Astrocyte of the cerebellum (primary cell): ENCODE measurements at regions of chr13 and their contacts with region 1.

Region 1: DNA sequence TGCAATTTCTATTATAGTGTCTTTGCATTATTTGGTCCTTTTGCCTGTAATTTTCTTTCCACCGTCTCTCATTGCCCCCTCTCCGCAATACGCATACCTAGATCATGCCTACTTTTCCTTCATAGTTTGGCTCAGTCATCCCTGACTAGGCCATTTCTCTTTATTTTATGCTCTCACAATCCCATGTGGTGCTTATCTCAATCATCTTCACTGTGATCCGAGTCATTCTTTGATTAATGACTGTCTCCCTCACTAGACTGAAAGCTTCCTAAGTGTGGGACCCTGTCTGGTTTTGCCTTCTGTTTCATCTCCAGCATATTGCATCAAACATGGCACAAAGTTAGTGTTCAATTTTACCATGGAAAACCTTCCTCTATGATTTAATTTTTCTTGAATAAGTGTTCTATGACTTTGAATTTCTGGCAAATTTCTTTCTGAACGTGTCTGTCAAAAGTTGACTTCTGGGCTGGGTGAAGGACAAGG is 43.7 kb upstream of the OLFM4 start:
- DNase-seq: no peak
- H3K4me3 ChIP-seq: no peak overlapping the region
- CTCF ChIP-seq: no peak

Region 2: DNA sequence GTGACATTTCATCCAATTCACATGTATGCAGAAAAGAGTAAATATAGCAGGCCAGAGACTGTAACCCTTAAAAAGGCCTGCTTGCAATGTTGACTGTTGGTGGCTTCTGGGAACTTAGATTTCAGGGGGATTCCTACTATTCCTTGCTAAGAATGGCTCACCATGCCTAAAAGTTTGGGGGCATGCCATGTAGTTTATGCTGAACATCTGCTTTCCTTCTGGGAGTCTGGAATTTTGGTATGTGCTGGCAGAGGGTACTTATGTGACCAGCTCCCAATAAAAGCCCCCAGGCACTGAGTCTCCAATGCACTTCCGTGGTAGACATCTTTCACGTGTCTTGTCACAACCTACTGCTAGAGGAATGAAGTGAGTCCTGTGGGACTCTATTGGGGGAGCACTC is 48.1 kb before region 1 on chr13:
- in situ Hi-C with region 1: loop called (anchors 5 kb)
- DNase-seq: no peak
- H3K4me3 ChIP-seq: no peak overlapping the region
- CTCF ChIP-seq: no peak

Region 3: GRCh38 chr13:53090461-53090860 is 105.5 kb after region 1 on chr13:
- in situ Hi-C with region 1: no loop called
- DNase-seq: no peak
- H3K4me3 ChIP-seq: no peak overlapping the region
- CTCF ChIP-seq: no peak